Dendritic cell treated with granulocyte-macrophage colony-stimulating factor and Interleukin-4, amounts not matched to agents 40 ng/mL and 50 ng/mL, for 4 days (primary cell): ENCODE measurements at regions of chr1 and their contacts with region 1.

Region 1: GRCh38 chr1:45002650-45003645 is 8.2 kb downstream of the HECTD3 start:
- H3K4me3 Mint-ChIP-seq: no peak overlapping the region
- H3K27ac Mint-ChIP-seq: peak overlapping the region; percentile 87
- H3K4me1 Mint-ChIP-seq: peaks cover 27% of the 10 kb centered on the region
- H3K27me3 Mint-ChIP-seq: no peaks in the 10 kb centered on the region

Region 2: GRCh38 chr1:44988531-44989156 is 14.3 kb before region 1 on chr1:
- intact Hi-C with region 1: loop called (anchors 2 kb)
- H3K4me3 Mint-ChIP-seq: no peak overlapping the region
- H3K27ac Mint-ChIP-seq: no peak overlapping the region
- H3K4me1 Mint-ChIP-seq: peaks cover 6% of the 10 kb centered on the region
- H3K27me3 Mint-ChIP-seq: no peaks in the 10 kb centered on the region